ENCODE measurements at regions of chr6 and their contacts with region 1.

Region 1: GRCh38 chr6:54244430-54244829 is 63.8 kb upstream of the TINAG start:
- DNase-seq: peak; percentile 26
- H3K27ac ChIP-seq: no peak overlapping the region
- CTCF ChIP-seq: peak; percentile 62

Region 2: GRCh38 chr6:53986165-53986720 is 258.2 kb before region 1 on chr6:
- CTCF ChIA-PET with region 1: interaction called, 22 read pairs
- POLR2A ChIA-PET with region 1: no interaction called
- DNase-seq: peak; percentile 26
- H3K27ac ChIP-seq: no peak overlapping the region
- CTCF ChIP-seq: peak; percentile 82